OCI-LY7 (cell line): ENCODE measurements at regions of chr11 and their contacts with region 1.

Region 1: DNA sequence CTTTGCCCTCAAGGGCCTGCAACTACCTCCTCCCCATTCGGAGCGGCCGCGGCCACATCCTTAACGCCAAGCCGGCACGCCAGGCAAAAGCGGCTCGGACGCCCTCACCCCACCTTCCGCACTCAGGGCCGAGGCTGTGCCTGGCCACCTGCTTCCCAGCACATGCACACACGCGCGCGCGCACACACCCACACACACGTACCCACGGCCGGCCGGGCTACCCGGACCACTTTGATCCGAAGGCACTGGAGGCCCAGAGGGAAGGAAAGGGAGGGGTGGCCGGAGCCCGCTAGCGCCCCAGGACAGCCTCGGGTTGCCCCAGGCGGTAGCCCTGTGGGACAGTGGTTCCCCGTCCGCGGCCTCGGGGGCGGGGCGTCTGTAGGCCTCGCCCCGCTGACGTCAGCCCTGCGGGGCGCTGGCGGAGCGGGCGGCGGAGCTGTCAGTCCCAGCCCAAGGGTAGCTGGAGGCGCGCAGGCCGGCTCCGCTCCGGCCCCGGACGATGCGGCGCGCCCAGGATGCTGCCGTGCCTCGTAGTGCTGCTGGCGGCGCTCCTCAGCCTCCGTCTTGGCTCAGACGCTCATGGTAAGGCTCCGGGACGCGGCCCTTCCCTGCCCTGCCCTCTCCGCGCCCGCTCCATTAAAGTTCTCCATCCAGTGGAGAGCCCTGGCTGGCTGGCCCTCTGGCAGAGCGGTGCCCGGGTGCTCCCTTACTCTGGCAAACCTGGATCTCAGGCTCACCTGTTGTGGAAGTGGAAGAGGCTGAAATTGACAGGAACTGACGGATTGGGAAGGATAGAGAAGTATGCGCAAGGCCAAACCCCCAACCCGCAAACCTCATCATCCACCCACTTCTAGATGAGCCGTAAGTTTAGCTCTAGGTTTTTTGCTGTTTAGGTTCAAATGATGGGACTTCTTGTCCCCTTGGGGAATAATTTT is at the start of gene IL10RA:
- DNase-seq: peak; percentile 92
- H3K4me3 ChIP-seq: peak within 1 kb of the TSS; percentile 78
- H3K27ac ChIP-seq: peak within 1 kb of the TSS; percentile 44
- H3K4me1 ChIP-seq: peaks cover 35% of the 10 kb centered on the region
- CTCF ChIP-seq: peak; percentile 34
- total RNA-seq, gene IL10RA: 8.2 and 15.7 TPM in 2 replicates

Region 2: DNA sequence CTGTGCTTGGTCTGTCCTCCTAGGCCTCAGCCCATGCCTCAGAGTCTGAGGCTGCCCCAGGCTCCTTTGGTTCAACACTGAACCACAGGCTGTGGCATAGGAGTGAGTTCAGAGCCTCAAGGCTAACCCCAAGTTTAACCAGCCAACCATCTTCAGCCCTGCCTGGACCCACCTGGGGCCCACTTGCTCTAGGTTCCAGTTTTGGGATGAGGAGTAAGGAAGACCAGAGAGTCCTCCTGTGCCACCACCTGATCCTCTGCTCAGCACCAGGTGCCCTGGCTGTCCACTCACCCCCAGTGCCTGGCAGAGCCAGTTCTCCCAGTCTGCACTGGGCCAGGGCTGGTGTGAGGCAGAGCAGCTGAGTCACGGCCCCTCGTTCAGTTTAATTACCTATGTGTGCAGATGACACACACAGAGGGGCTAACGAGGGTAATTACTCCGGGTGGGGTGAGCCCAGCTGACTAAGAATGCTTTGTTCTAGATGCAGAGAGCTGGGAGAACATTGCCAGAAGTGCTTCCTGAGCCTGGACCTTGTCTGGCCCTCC is 45.0 kb before region 1 on chr11:
- CTCF ChIA-PET with region 1: no interaction called
- POLR2A ChIA-PET with region 1: no interaction called
- intact Hi-C with region 1: no loop called
- DNase-seq: no peak
- H3K4me3 ChIP-seq: no peak overlapping the region
- H3K27ac ChIP-seq: no peak overlapping the region
- H3K4me1 ChIP-seq: peaks cover 3% of the 10 kb centered on the region
- CTCF ChIP-seq: no peak

Region 3: GRCh38 chr11:118002541-118003423 is 16.6 kb after region 1 on chr11:
- CTCF ChIA-PET with region 1: interaction called, 13 read pairs
- POLR2A ChIA-PET with region 1: interaction called, 59 read pairs
- intact Hi-C with region 1: no loop called
- DNase-seq: peak; percentile 28
- H3K4me3 ChIP-seq: no peak overlapping the region
- H3K27ac ChIP-seq: no peak overlapping the region
- H3K4me1 ChIP-seq: peaks cover 60% of the 10 kb centered on the region
- CTCF ChIP-seq: no peak

Region 4: DNA sequence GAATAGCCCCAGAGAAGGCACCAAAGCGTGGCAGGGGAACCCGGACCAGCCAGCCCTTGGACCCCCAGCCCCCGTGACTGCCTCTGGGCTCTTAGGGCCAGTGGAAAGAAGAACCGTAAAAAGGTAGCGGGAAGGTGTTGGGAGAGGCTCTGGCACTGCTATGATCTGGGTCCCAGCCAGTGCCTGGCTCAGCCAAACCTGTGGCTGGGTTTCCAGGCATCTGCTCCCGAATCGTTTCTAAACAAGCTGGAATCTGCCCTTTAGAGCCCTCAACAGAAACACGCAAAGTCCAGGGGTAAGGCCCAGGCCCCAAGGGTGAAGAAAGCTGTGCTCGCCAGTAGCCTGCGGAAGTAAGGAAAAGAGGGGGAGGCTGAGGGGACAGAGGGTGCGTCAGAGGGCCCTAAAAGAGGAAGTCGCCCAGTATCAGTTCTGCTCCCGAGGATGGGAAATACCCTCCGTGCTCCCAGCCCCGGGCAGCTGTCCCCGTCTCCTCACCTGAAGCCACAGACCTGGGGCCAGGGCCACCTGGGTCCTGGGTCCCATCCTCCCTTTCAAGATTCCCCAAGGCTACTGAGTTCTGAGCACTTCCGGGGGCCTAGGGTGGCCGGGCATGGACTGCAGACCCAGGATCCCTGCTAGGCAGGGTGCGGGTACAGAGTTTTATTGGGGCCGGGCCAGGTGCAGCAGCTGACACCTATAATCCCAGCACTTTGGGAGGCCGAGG is 24.7 kb after region 1 on chr11:
- CTCF ChIA-PET with region 1: interaction called, 13 read pairs
- POLR2A ChIA-PET with region 1: interaction called, 59 read pairs
- intact Hi-C with region 1: loop called (anchors 1 kb)
- DNase-seq: peak; percentile 93
- H3K4me3 ChIP-seq: peak overlapping the region; percentile 54
- H3K27ac ChIP-seq: peak overlapping the region; percentile 99
- H3K4me1 ChIP-seq: peaks cover 82% of the 10 kb centered on the region
- CTCF ChIP-seq: no peak

Region 5: DNA sequence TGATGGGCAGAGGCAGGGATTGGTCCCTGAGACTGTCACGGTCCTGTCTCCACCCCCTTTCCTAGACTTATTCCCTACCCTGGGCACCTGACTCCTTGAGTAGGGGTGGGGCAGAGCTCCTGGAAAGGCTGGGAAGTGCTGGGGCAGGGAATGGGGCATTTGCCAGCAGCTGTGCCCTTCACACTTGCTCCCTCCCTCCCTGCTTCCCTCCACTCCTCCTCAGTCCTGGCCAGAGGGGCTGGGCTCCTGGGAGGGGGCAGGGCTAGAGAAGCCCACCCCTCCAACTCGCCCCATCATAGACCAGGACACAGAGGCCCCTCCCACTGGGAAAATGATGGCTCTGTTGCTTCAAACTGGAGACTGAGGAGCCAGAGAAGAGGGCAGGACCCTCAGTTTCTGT is 178.7 kb after region 1 on chr11:
- CTCF ChIA-PET with region 1: no interaction called
- POLR2A ChIA-PET with region 1: no interaction called
- intact Hi-C with region 1: no loop called
- DNase-seq: no peak
- H3K4me3 ChIP-seq: no peak overlapping the region
- H3K27ac ChIP-seq: no peak overlapping the region
- H3K4me1 ChIP-seq: no peaks in the 10 kb centered on the region
- CTCF ChIP-seq: no peak